AG04449 (cell line): ENCODE measurements at regions of chr19 and their contacts with region 1.

Region 1: DNA sequence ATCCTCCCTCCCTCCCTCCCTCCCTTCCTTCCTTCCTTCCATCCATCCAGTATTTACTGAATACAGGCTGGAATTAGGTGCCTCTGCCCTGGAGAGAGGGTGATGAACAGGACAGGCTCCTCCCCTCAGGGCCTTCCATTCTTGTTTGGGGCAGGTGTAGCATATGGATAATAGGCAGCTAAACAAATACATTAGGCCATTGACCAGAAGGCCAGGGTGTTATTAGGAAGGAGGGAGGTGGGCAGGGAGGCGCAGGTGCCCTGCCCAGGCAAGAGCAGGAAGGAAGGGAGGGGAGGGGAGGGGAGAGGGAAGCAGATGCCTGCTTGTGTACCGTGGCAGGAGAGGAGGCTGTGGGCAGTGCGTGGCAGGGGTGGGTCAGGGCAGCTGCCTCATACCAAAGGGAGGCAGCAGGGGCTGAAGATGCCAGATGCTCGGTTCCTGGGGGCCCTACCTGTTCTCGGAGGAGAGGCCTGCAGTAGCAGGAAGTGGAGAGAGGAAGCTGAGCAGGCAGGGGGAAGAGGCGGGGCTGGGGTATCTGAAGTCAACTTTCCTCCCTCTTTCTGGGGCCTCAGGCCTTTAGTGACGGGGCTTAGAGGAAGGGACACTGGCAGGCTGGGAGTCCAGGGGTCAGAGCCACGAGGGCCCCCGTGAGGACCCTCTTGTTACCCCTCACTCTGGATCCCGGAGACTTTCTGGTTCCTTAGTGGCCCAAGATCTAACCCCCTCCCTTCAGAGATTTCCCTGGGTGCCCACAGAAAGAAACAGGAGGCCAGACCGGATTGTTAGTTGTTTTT is at the start of gene RINL:
- DNase-seq: no peak
- H3K4me3 ChIP-seq: no peak within 1 kb of the TSS
- CTCF ChIP-seq: no peak

Region 2: DNA sequence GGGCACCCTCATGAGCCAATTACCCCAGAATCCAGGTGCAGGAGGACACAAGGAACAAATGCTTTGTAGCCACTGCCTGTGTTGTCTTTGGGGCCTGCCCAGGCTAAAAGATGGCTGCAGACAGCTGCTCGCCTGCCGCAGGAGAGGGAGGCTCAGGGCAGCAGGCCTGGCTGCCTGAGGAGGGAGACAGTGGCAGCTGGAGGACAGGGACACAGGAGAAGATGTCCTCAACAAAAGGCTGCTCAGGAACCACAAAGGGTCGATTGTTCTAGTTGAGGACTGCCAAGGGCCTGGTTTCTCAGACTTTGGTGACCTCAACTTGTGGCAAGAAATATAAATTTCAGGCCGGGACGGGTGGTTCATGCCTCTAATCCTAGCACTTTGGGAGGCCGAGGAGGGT is 13.8 kb after region 1 on chr19:
- CTCF ChIA-PET with region 1: interaction called, 70 read pairs
- POLR2A ChIA-PET with region 1: no interaction called
- DNase-seq: no peak
- H3K4me3 ChIP-seq: no peak overlapping the region
- CTCF ChIP-seq: no peak

Region 3: DNA sequence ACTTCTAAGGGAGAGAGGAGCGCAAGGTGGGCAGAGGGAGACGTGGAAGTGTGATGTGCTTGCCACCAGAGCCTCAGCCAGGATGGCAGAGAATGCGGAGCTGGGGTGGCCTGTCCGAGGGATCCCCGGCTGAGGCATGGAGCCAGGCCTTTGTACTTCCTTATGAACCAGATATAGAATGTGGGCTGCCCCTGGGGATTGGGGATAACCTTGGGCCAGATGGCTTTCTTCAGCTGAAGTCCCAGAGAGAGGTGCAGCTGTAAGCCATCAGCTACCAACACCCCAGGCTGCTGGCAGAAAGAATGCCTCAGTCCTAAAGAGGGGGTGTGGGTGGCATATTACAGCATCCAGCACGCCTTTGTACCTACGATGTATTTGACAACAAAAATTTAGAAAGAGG is 123.1 kb after region 1 on chr19:
- CTCF ChIA-PET with region 1: no interaction called
- POLR2A ChIA-PET with region 1: no interaction called
- DNase-seq: no peak
- H3K4me3 ChIP-seq: no peak overlapping the region
- CTCF ChIP-seq: no peak